PC-3 (cell line): ENCODE measurements at regions of chr3 and their contacts with region 1.

Region 1: DNA sequence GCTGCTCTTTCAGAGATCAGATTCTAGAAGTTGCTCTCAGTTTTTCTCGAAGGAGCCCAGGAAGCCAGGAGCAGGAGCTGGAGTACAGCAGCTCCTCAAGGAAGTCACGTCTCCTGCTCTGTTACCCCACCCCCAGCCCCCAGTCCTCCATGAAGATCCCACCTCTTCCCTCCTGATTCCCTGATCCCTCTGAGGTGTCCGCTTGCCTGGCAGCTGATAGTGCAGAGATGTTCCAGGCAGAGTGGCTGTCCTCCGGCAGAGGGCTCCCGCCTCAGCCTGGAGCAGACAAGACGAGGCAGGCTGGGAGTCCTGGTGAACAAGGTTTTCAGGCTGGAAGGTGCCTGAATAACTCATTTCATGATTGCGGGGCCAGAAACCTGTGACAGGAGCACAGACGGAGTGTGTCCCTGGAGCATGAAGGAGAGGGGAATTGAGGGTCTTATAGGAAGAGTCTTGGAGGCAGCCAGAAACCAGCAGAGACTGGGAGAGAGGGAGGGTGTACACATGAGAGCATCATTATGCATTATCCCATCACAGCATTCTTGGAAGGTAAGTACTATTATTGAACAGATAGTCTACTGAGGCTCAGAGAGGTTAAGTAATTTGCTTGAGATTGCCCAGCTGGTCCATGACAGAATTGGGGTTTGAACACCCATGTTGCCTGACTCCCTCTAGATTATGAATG is 1.2 kb downstream of the HRH1 start:
- DNase-seq: peak; percentile 85
- ATAC-seq: peak; percentile 89
- H3K4me3 ChIP-seq: peak overlapping the region; percentile 74
- H3K27ac ChIP-seq: no peak overlapping the region
- H3K4me1 ChIP-seq: peaks cover 12% of the 10 kb centered on the region; the same call in 1 of the 2 replicates
- H3K27me3 ChIP-seq: no peaks in the 10 kb centered on the region
- CTCF ChIP-seq: peak; percentile 92

Region 2: DNA sequence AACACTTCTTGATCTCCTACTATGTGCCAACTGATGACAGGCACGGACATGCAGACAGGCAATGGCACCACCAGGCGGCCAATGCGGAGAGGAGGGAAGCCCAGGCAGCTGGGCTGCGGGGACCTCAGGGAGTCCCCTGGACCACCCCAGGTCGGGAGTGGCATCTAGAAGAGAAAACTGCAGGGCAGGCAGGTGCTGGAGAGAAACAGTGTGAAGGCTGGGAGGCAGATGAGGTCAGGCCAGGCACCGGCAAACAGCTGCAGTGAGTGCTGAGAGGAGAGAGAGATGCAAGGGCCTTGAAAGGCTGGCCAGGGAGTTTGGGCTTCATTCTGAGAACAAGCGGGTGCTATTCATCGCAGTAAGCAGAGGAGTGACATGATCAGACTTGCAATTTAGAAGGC is 133.9 kb before region 1 on chr3:
- CTCF ChIA-PET with region 1: no interaction called
- POLR2A ChIA-PET with region 1: no interaction called
- intact Hi-C with region 1: no loop called
- DNase-seq: no peak
- ATAC-seq: no peak
- H3K4me3 ChIP-seq: no peak overlapping the region
- H3K27ac ChIP-seq: no peak overlapping the region
- H3K4me1 ChIP-seq: no peaks in the 10 kb centered on the region
- H3K27me3 ChIP-seq: peaks cover 60% of the 10 kb centered on the region
- CTCF ChIP-seq: no peak

Region 3: GRCh38 chr3:11060500-11061251 is 94.8 kb before region 1 on chr3:
- CTCF ChIA-PET with region 1: interaction called, 5 read pairs
- POLR2A ChIA-PET with region 1: no interaction called
- intact Hi-C with region 1: loop called (anchors 1 kb)
- DNase-seq: peak; percentile 83
- ATAC-seq: peak; percentile 80
- H3K4me3 ChIP-seq: peak overlapping the region; percentile 44
- H3K27ac ChIP-seq: no peak overlapping the region
- H3K4me1 ChIP-seq: no peaks in the 10 kb centered on the region
- H3K27me3 ChIP-seq: no peaks in the 10 kb centered on the region
- CTCF ChIP-seq: peak; percentile 96

Region 4: GRCh38 chr3:11128682-11129632 is 26.5 kb before region 1 on chr3:
- CTCF ChIA-PET with region 1: no interaction called
- POLR2A ChIA-PET with region 1: no interaction called
- intact Hi-C with region 1: no loop called
- DNase-seq: no peak
- ATAC-seq: no peak
- H3K4me3 ChIP-seq: no peak overlapping the region
- H3K27ac ChIP-seq: no peak overlapping the region
- H3K4me1 ChIP-seq: no peaks in the 10 kb centered on the region
- H3K27me3 ChIP-seq: no peaks in the 10 kb centered on the region
- CTCF ChIP-seq: no peak

Region 5: GRCh38 chr3:11185564-11186317 is 30.3 kb after region 1 on chr3:
- CTCF ChIA-PET with region 1: no interaction called
- POLR2A ChIA-PET with region 1: no interaction called
- intact Hi-C with region 1: loop called (anchors 2 kb)
- DNase-seq: peak; percentile 99
- ATAC-seq: peak; percentile 88
- H3K4me3 ChIP-seq: peak overlapping the region; percentile 62
- H3K27ac ChIP-seq: peak overlapping the region; percentile 78
- H3K4me1 ChIP-seq: peaks cover 28% of the 10 kb centered on the region
- H3K27me3 ChIP-seq: no peaks in the 10 kb centered on the region
- CTCF ChIP-seq: peak; percentile 53

Region 6: GRCh38 chr3:11201246-11202024 is 46.0 kb after region 1 on chr3:
- CTCF ChIA-PET with region 1: interaction called, 4 read pairs
- POLR2A ChIA-PET with region 1: no interaction called
- intact Hi-C with region 1: loop called (anchors 1 kb)
- DNase-seq: peak; percentile 81
- ATAC-seq: peak; percentile 81
- H3K4me3 ChIP-seq: no peak overlapping the region
- H3K27ac ChIP-seq: peak overlapping the region; percentile 55
- H3K4me1 ChIP-seq: peaks cover 33% of the 10 kb centered on the region
- H3K27me3 ChIP-seq: no peaks in the 10 kb centered on the region
- CTCF ChIP-seq: no peak

Region 7: GRCh38 chr3:11221818-11222415 is 66.4 kb after region 1 on chr3:
- CTCF ChIA-PET with region 1: no interaction called
- POLR2A ChIA-PET with region 1: no interaction called
- intact Hi-C with region 1: loop called (anchors 1 kb)
- DNase-seq: peak; percentile 14
- ATAC-seq: no peak
- H3K4me3 ChIP-seq: no peak overlapping the region
- H3K27ac ChIP-seq: no peak overlapping the region
- H3K4me1 ChIP-seq: peaks cover 30% of the 10 kb centered on the region
- H3K27me3 ChIP-seq: no peaks in the 10 kb centered on the region
- CTCF ChIP-seq: peak; percentile 45